ENCODE measurements at regions of chr5 and their contacts with region 1.

Region 1: DNA sequence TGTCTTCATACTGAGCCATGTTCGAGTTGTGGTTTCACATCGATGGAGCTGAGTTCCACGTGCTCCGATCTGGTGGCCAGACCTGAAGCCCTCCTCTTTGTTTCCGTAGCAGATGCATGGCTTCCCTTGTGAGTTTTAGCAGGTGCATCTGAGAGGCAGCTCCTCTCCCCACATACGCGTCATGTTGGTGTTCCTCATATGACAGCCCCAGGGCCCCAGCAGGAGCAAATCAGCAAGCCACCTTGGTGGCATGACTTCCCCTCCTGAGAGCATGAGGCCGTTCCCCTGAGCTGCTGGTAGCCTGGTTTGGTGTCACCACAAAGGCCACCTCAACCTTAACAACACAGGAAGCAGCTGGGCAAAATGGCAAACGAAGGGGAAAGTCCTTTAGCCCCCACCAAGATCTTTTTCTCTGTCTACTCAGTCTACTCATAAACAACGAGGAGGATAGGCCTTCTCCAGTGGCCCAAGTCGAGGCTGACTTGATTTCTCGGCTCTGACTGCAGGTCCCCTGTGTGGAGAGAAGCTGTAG is 5.9 kb downstream of the CYFIP2 start:
- DNase-seq: peak; percentile 63 to 94 (median 91)
- ATAC-seq: peak; percentile 95
- H3K4me3 ChIP-seq: peak overlapping the region; percentile 37
- H3K4me3 Mint-ChIP-seq: peak overlapping the region; percentile 71 to 95 (median 84)
- H3K27ac ChIP-seq: peak overlapping the region; percentile 84
- H3K27ac Mint-ChIP-seq: peak overlapping the region; percentile 95 to 100 (median 99)
- H3K4me1 ChIP-seq: peaks cover 76 to 78% of the 10 kb centered on the region in 2 donors
- H3K4me1 Mint-ChIP-seq: peaks cover 73 to 95% (median 90%) of the 10 kb centered on the region in 7 donors
- H3K27me3 ChIP-seq: no peaks in the 10 kb centered on the region
- H3K27me3 Mint-ChIP-seq: no peaks in the 10 kb centered on the region

Region 2: DNA sequence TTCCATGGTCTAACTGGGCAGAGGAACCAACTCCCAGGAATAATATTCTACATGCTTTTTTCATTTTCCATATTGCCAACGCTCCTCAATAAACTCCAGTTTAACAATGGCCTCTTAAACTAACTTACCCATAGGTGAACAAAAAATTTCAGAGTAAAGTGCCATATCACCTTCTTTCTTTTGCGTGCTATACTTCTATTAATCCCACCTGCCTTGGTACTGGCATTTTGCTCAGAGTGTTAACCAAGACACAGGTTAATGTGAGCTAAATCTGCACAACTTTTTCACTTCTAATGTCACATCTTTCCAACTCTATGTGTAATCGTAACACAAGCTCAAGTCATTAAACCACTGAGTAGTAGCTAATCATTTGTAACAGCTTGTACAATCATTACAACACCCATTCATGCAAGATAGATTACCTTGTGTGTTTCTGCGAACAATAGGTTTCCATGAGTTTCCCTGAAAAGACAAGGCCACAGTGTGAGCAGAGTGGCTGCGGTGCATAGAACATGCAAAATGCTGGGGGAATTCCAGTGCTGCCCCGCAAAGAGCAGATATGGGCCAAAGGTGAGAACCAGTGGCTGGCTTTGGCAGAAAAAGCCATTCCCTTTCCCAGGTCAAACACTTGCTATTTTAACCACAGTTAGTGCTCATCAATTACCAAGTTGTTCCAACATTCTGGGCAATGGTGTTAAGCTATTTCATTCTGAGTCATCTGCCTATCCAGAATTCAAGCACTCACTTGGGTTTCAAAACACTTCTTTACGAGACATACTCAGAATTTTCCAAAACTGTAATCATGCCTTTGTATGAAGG is 351.6 kb before region 1 on chr5:
- CTCF ChIA-PET with region 1: no interaction called
- POLR2A ChIA-PET with region 1: no interaction called
- intact Hi-C with region 1: loop called in 1 of 2 experiments (anchors 2 kb)
- DNase-seq: peak in 1 of 9 donors; percentile 76
- ATAC-seq: peak; percentile 46
- H3K4me3 ChIP-seq: no peak overlapping the region
- H3K4me3 Mint-ChIP-seq: peak overlapping the region in 1 of 10 donors; percentile 79
- H3K27ac ChIP-seq: no peak overlapping the region
- H3K27ac Mint-ChIP-seq: peak overlapping the region in 7 of 9 donors; percentile 18 to 94 (median 52)
- H3K4me1 ChIP-seq: peaks cover 9 to 10% of the 10 kb centered on the region in 2 donors
- H3K4me1 Mint-ChIP-seq: peaks cover 12 to 78% (median 67%) of the 10 kb centered on the region in 7 donors
- H3K27me3 ChIP-seq: no peaks in the 10 kb centered on the region
- H3K27me3 Mint-ChIP-seq: no peaks in the 10 kb centered on the region

Region 3: DNA sequence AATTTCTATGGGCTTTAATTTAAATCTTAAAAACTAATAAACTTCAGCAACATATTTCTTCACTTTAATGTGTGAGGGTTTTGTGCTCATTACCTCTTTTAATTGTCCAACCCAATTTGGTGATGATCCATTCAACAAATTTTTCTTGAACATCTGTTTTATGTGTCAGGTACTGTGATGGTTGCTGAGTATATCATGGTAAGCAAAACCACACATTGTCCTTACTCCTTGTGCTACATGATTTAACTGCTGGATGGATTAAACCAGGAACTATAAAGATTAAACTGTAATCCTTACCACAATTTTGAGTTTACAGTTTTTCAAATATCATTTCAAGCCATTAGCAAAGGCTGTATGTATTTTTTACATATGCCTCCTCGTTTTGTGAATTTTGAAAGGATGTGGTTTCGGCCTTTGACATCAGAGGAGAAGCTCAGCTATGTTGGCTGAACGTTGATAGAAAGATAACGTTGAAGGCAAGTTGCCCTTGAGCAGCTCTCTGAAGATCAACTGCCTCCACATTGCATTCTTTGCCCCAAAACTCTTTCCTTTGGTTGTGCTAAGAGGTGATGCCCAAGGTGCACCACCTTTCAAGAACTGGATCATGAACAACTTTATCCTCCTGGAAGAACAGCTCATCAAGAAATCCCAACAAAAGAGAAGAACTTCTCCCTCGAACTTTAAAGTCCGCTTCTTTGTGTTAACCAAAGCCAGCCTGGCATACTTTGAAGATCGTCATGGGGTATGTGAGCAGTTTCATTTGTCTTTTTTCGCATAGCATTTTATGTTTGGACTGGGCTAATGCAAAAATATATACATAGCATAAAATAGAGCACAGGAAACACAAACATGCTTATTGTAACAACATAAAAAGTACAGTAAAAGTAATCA is 91.2 kb before region 1 on chr5 and contains the start of gene ITK:
- CTCF ChIA-PET with region 1: interaction called, 4 read pairs
- POLR2A ChIA-PET with region 1: interaction called, 8 read pairs
- intact Hi-C with region 1: loop called in 1 of 2 experiments (anchors 1 kb)
- DNase-seq: peak in 7 of 9 donors; percentile 66 to 84 (median 77)
- ATAC-seq: peak; percentile 88
- H3K4me3 ChIP-seq: peak within 1 kb of the TSS; percentile 62
- H3K4me3 Mint-ChIP-seq: peak within 1 kb of the TSS; percentile 89 to 100 (median 97)
- H3K27ac ChIP-seq: peak within 1 kb of the TSS; percentile 81
- H3K27ac Mint-ChIP-seq: peak within 1 kb of the TSS; percentile 91 to 99 (median 96)
- H3K4me1 ChIP-seq: peaks cover 33 to 42% of the 10 kb centered on the region in 2 donors
- H3K4me1 Mint-ChIP-seq: peaks cover 27 to 61% (median 50%) of the 10 kb centered on the region in 7 donors
- H3K27me3 ChIP-seq: no peaks in the 10 kb centered on the region
- H3K27me3 Mint-ChIP-seq: no peaks in the 10 kb centered on the region
- total RNA-seq, gene ITK: 278 to 481 (median 324) TPM

Region 4: GRCh38 chr5:157219491-157220271 is 52.1 kb before region 1 on chr5:
- CTCF ChIA-PET with region 1: interaction called, 3 read pairs
- POLR2A ChIA-PET with region 1: interaction called, 7 read pairs
- intact Hi-C with region 1: loop called in 1 of 2 experiments (anchors 2 kb)
- DNase-seq: peak in 1 of 9 donors; percentile 54
- ATAC-seq: no peak
- H3K4me3 ChIP-seq: no peak overlapping the region
- H3K4me3 Mint-ChIP-seq: peak overlapping the region in 9 of 10 donors; percentile 39 to 89 (median 65)
- H3K27ac ChIP-seq: peak overlapping the region; percentile 63
- H3K27ac Mint-ChIP-seq: peak overlapping the region; percentile 89 to 98 (median 94)
- H3K4me1 ChIP-seq: peaks cover 82 to 87% of the 10 kb centered on the region in 2 donors
- H3K4me1 Mint-ChIP-seq: peaks cover 54 to 94% (median 85%) of the 10 kb centered on the region in 7 donors
- H3K27me3 ChIP-seq: no peaks in the 10 kb centered on the region
- H3K27me3 Mint-ChIP-seq: no peaks in the 10 kb centered on the region

Region 5: GRCh38 chr5:157259699-157260098 is 12.1 kb before region 1 on chr5:
- CTCF ChIA-PET with region 1: interaction called, 25 read pairs
- POLR2A ChIA-PET with region 1: interaction called, 200 read pairs
- intact Hi-C with region 1: no loop called
- DNase-seq: no peak
- ATAC-seq: no peak
- H3K4me3 ChIP-seq: no peak overlapping the region
- H3K4me3 Mint-ChIP-seq: peak overlapping the region in 4 of 10 donors; percentile 6 to 32 (median 20)
- H3K27ac ChIP-seq: no peak overlapping the region
- H3K27ac Mint-ChIP-seq: peak overlapping the region; percentile 0 to 98 (median 58)
- H3K4me1 ChIP-seq: peaks cover 41 to 70% of the 10 kb centered on the region in 2 donors
- H3K4me1 Mint-ChIP-seq: peaks cover 54 to 88% (median 83%) of the 10 kb centered on the region in 7 donors
- H3K27me3 ChIP-seq: no peaks in the 10 kb centered on the region
- H3K27me3 Mint-ChIP-seq: no peaks in the 10 kb centered on the region

Region 6: DNA sequence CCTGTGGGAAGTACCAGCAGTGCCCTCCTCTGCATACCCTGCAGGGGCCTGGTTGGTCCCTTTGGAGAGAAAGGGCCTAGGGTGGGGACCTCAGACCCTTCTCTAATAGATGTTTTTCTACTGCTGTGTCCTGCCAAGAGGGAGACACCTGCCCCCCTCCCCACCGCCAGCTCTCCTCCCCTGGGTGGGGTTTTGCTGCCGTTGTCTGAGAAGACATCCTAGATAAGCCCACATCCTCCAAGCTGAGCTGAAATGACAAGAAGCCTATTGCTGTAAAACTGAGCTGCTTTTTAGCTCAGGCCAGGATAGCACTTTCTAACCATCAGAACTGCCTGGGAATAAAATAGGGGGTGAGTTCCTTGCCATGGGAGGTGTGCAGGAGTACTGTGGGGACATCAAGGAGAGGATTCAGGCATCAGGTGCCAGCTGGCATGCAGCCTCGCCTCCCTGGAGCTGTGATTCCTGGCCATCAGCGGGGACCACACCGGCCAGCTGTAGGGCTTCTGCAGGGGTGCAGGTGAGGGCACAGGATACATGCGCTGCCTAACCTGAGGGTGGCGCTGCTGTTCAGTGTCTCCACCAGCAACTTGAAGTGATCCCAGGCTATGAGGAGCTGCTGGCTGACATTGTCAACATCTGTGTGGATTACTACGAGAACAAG is 32.0 kb after region 1 on chr5:
- CTCF ChIA-PET with region 1: interaction called, 10 read pairs
- POLR2A ChIA-PET with region 1: interaction called, 59 read pairs
- intact Hi-C with region 1: loop called (anchors 1 to 2 kb)
- DNase-seq: peak; percentile 38 to 79 (median 67)
- ATAC-seq: peak; percentile 80
- H3K4me3 ChIP-seq: peak overlapping the region; percentile 50
- H3K4me3 Mint-ChIP-seq: peak overlapping the region; percentile 71 to 89 (median 82)
- H3K27ac ChIP-seq: peak overlapping the region; percentile 62
- H3K27ac Mint-ChIP-seq: peak overlapping the region; percentile 83 to 97 (median 94)
- H3K4me1 ChIP-seq: peaks cover 51 to 56% of the 10 kb centered on the region in 2 donors
- H3K4me1 Mint-ChIP-seq: peaks cover 48 to 74% (median 65%) of the 10 kb centered on the region in 7 donors
- H3K27me3 ChIP-seq: no peaks in the 10 kb centered on the region
- H3K27me3 Mint-ChIP-seq: no peaks in the 10 kb centered on the region

Region 7: DNA sequence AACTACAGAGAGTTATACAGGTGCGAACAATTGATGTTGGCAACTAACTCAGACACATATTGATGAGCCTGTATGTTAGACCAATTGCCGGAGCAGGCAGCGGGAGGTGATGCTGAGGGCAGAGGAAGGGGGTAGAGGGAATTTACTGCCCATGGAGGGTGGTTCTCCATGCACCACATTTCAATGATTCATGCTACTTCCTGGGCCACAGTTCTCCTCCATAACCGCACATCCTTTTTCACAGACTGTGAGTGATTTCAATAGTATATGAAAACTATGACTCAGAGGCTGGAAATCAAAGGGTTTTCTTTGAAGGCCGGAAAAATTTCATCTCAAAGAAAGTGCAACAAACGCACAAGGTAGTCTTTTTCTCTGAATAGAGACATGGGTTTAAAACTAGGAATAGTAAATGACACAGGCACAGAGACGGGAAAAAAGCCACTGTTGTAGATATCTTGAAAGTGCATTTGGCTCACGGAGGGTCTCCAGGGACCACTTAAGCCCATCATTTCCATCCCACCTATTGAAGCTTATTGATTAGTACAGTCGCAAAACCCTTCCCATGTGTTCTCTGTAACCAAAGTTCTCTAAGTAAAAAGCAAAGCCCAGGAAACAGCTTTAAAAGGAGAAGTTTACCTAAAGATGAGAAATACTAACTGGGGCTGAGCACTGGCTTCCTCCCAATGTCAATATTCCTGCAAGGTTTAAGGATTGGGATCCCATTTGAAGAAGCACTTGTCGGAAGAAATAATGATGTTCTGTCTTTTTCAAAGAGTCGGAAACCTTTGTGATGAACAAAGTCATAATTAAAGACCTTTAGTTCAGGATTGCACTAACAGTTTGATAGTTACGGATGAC is 331.8 kb after region 1 on chr5:
- CTCF ChIA-PET with region 1: no interaction called
- POLR2A ChIA-PET with region 1: no interaction called
- intact Hi-C with region 1: loop called in 1 of 2 experiments (anchors 5 kb)
- DNase-seq: peak in 8 of 9 donors; percentile 16 to 65 (median 50)
- ATAC-seq: peak; percentile 90
- H3K4me3 ChIP-seq: peak overlapping the region; percentile 1
- H3K4me3 Mint-ChIP-seq: peak overlapping the region in 9 of 10 donors; percentile 0 to 74 (median 63)
- H3K27ac ChIP-seq: no peak overlapping the region
- H3K27ac Mint-ChIP-seq: peak overlapping the region in 7 of 9 donors; percentile 1 to 85 (median 49)
- H3K4me1 ChIP-seq: peaks cover 26 to 39% of the 10 kb centered on the region in 2 donors
- H3K4me1 Mint-ChIP-seq: peaks cover 30 to 81% (median 40%) of the 10 kb centered on the region in 7 donors
- H3K27me3 ChIP-seq: no peaks in the 10 kb centered on the region
- H3K27me3 Mint-ChIP-seq: no peaks in the 10 kb centered on the region

Measured in naive thymus-derived CD4-positive, alpha-beta T cell (primary cell).